BJ (cell line): ENCODE measurements at regions of chr3 and their contacts with region 1.

Region 1: DNA sequence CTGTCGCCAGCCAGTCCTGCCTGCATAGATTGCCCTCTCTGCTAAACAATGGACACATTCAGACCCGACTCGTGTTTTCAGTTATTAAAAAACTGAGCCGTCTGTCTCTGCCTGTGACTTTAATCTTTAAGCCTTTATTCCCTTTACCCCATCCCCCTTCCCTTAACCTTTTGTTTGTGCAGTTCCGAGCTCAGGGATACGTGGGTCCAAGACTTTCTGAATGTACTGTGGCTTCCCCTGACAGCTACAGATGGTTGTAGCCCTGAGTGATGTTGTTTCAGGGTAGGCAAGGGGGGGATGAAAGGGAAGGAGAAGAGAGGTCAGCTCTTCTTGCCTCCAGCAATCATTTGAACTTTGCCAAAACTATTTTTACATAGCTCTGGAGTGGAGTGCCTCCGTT is 44.6 kb downstream of the EEFSEC start:
- DNase-seq: no peak
- H3K4me3 ChIP-seq: no peak overlapping the region
- H3K27me3 ChIP-seq: no peaks in the 10 kb centered on the region
- CTCF ChIP-seq: no peak

Region 2: DNA sequence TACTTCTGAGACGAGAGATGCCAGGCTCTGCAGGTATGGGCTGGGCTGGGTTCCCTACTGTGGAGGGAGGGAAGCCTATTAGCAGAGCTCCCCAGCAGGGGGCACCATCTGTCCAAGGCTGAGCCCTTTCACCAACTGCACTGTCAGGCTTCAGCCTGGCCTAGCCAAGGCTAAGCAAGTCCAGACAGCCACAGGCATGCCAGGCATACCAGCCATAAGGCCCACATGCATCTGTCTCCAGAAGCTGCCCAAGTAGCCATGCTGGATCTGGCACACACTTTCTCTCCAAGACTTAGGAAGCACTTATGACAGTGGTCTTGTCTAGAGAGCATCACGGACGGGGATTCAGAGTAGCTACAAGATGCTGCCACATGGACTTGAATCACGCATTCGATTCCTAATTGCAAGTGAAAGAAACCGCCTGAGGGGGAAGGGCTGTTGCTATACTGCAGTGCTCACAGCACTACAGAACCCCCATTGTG is 102.6 kb before region 1 on chr3:
- CTCF ChIA-PET with region 1: no interaction called
- POLR2A ChIA-PET with region 1: no interaction called
- DNase-seq: peak; percentile 34
- H3K4me3 ChIP-seq: no peak overlapping the region
- H3K27me3 ChIP-seq: no peaks in the 10 kb centered on the region
- CTCF ChIP-seq: peak; percentile 88

Region 3: GRCh38 chr3:128153156-128154041 is 44.5 kb before region 1 on chr3 and contains the start of gene EEFSEC:
- CTCF ChIA-PET with region 1: no interaction called
- POLR2A ChIA-PET with region 1: interaction called, 10 read pairs
- DNase-seq: peak; percentile 29
- H3K4me3 ChIP-seq: peak within 1 kb of the TSS; percentile 93
- H3K27me3 ChIP-seq: no peaks in the 10 kb centered on the region
- CTCF ChIP-seq: no peak
- polyA plus RNA-seq, gene EEFSEC: 10.9 and 16.3 TPM in 2 replicates